ENCODE measurements at regions of chr3 and their contacts with region 1.

Region 1: DNA sequence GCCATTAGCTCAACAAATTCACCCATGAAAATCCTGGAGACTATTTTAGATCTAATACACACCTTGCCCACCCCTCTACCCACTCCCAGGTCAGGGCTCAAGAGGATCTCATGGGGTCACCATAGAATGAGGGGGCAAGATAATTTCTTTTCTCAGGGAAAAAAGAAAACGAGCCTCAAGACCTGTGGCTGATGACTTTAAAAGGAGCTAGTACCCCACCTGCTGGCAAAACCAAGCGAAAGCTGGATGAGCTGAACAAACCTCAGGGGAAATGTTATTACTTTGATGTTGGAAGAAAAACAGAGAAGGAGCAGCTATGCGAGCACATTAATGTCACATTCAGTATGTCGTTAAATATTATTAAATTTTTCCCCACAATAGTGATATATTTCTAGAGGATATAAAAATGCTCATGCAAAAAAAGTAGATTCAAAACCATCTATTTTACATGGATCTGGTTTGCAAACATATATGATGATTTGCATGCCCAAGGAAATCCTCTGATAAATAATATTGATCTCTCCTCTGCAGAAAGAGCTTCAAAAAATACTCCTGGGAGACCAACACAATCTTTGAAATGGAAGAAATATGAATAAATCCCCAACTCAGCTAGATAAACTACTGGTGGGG is 37.7 kb downstream of the PLD1 start:
- DNase-seq: peak; percentile 71
- ATAC-seq: peak; percentile 47
- H3K4me3 Mint-ChIP-seq: no peak overlapping the region
- H3K27ac Mint-ChIP-seq: no peak overlapping the region
- H3K4me1 Mint-ChIP-seq: no peaks in the 10 kb centered on the region
- H3K27me3 Mint-ChIP-seq: peaks cover 5% of the 10 kb centered on the region

Region 2: DNA sequence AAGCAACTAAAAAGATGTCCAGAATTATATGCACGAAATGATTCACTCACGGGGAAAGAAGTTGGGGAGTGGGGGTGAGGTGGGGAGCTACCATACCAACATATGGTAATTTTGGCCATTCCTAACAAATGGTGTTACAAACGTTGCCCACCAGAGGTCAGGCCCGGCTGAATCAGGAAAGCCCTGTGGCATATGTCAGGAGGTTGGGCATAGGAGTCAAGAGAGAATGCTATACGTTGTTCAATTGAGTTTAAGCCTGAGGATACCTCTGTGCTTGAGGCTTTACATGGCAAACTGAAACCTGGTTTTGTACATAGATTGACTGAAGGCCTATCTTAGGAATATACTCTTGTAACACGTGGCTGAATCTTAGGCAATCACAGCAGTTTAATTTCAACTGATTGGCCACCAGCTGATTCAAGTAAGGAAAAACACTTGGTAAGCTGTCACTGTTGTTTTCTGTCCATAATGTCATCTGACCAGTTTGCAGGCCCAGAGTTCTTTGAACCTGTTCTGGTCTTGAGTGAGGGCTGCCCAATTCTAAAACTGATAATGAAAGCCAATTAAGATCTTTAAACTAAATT is 722.6 kb before region 1 on chr3:
- CTCF ChIA-PET with region 1: interaction called, 5 read pairs
- POLR2A ChIA-PET with region 1: no interaction called
- intact Hi-C with region 1: loop called in 1 of 2 experiments (anchors 2 kb)
- DNase-seq: peak; percentile 70
- ATAC-seq: peak; percentile 80
- H3K4me3 Mint-ChIP-seq: no peak overlapping the region
- H3K27ac Mint-ChIP-seq: no peak overlapping the region
- H3K4me1 Mint-ChIP-seq: no peaks in the 10 kb centered on the region
- H3K27me3 Mint-ChIP-seq: peaks cover 5% of the 10 kb centered on the region

Region 3: GRCh38 chr3:171566803-171567422 is 205.6 kb before region 1 on chr3:
- CTCF ChIA-PET with region 1: interaction called, 16 read pairs
- POLR2A ChIA-PET with region 1: no interaction called
- intact Hi-C with region 1: no loop called
- DNase-seq: no peak
- ATAC-seq: peak; percentile 65
- H3K4me3 Mint-ChIP-seq: no peak overlapping the region
- H3K27ac Mint-ChIP-seq: no peak overlapping the region
- H3K4me1 Mint-ChIP-seq: peaks cover 18% of the 10 kb centered on the region
- H3K27me3 Mint-ChIP-seq: peaks cover 5% of the 10 kb centered on the region

Region 4: GRCh38 chr3:171646357-171647133 is 126.0 kb before region 1 on chr3:
- CTCF ChIA-PET with region 1: interaction called, 55 read pairs
- POLR2A ChIA-PET with region 1: no interaction called
- intact Hi-C with region 1: loop called (anchors 1 kb)
- DNase-seq: no peak
- ATAC-seq: no peak
- H3K4me3 Mint-ChIP-seq: no peak overlapping the region
- H3K27ac Mint-ChIP-seq: no peak overlapping the region
- H3K4me1 Mint-ChIP-seq: no peaks in the 10 kb centered on the region
- H3K27me3 Mint-ChIP-seq: no peaks in the 10 kb centered on the region

Region 5: GRCh38 chr3:172341482-172342059 is 569.0 kb after region 1 on chr3:
- CTCF ChIA-PET with region 1: interaction called, 9 read pairs
- POLR2A ChIA-PET with region 1: no interaction called
- intact Hi-C with region 1: loop called in 1 of 2 experiments (anchors 5 kb)
- DNase-seq: no peak
- ATAC-seq: peak; percentile 80
- H3K4me3 Mint-ChIP-seq: no peak overlapping the region
- H3K27ac Mint-ChIP-seq: no peak overlapping the region
- H3K4me1 Mint-ChIP-seq: no peaks in the 10 kb centered on the region
- H3K27me3 Mint-ChIP-seq: no peaks in the 10 kb centered on the region